ENCODE measurements at regions of chr3 and their contacts with region 1.

Region 1: GRCh38 chr3:139006051-139006716 is at the start of gene PRR23A:
- DNase-seq: no peak
- ATAC-seq: no peak
- H3K4me3 ChIP-seq: no peak within 1 kb of the TSS
- H3K27ac ChIP-seq: no peak within 1 kb of the TSS
- H3K4me1 ChIP-seq: no peaks in the 10 kb centered on the region
- H3K27me3 ChIP-seq: no peaks in the 10 kb centered on the region
- CTCF ChIP-seq: no peak
- total RNA-seq, gene PRR23A: not detected

Region 2: DNA sequence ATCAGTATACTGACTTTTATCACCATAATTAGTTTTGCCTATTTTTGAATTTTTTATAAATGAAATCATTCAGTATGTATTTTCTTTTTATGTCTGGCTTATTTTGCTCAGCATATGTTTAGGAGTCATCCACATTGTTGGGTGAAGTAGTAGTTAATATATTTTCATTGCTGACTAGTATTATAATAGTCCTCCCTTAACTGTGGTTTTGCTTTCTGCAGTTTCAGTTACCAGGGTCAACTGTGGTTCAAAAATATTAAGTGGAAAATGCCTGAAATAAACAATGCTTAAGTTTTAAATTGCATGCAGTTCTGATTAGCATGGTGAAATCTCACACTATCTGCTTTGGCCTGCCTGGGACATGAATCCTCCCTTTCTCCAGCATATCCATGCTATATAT is 78.0 kb after region 1 on chr3:
- CTCF ChIA-PET with region 1: no interaction called
- POLR2A ChIA-PET with region 1: interaction called, 10 read pairs
- in situ Hi-C with region 1: no loop called
- intact Hi-C with region 1: no loop called
- DNase-seq: no peak
- ATAC-seq: no peak
- H3K4me3 ChIP-seq: no peak overlapping the region
- H3K27ac ChIP-seq: no peak overlapping the region
- H3K4me1 ChIP-seq: no peaks in the 10 kb centered on the region; the same call in 1 of the 2 replicates
- H3K27me3 ChIP-seq: peaks cover 6% of the 10 kb centered on the region; the same call in 1 of the 2 replicates
- CTCF ChIP-seq: no peak

Measured in Panc1 (cell line).